ENCODE measurements at regions of chr9 and their contacts with region 1.

Region 1: GRCh38 chr9:89021154-89021803 is 30.0 kb downstream of the S1PR3 start:
- DNase-seq: peak; percentile 82 to 85
- H3K4me3 ChIP-seq: peak overlapping the region; percentile 12; the same call in 1 of the 2 replicates
- H3K27ac ChIP-seq: peak overlapping the region; percentile 70
- H3K4me1 ChIP-seq: peaks cover 42% of the 10 kb centered on the region
- H3K27me3 ChIP-seq: no peaks in the 10 kb centered on the region
- CTCF ChIP-seq: no peak

Region 2: DNA sequence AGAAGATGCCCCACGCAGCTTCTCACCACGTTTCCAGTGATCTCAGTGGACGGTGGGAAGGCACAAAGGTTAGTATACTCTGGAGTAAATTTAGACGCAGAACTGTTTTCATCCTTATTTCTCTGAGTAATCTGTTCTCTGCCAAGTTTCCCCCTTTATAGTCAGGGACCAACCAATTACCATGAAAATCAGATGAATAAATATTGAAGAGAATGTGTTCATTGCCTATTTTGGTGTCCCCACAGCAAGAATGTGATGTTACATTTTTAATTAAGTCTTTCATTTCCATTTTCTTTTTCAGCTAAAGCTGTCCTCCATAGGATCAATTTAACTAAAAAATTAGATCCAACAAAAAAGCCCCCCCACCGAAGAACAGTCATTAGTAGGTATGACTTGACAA is 11.4 kb after region 1 on chr9:
- CTCF ChIA-PET with region 1: interaction called, 11 read pairs
- POLR2A ChIA-PET with region 1: no interaction called
- intact Hi-C with region 1: no loop called
- DNase-seq: no peak
- H3K4me3 ChIP-seq: no peak overlapping the region
- H3K27ac ChIP-seq: no peak overlapping the region
- H3K4me1 ChIP-seq: no peaks in the 10 kb centered on the region
- H3K27me3 ChIP-seq: no peaks in the 10 kb centered on the region
- CTCF ChIP-seq: no peak

Region 3: GRCh38 chr9:89137542-89138462 is 116.5 kb after region 1 on chr9:
- CTCF ChIA-PET with region 1: no interaction called
- POLR2A ChIA-PET with region 1: interaction called, 4 read pairs
- intact Hi-C with region 1: loop called (anchors 1 kb)
- DNase-seq: peak; percentile 80
- H3K4me3 ChIP-seq: no peak overlapping the region
- H3K27ac ChIP-seq: peak overlapping the region; percentile 64
- H3K4me1 ChIP-seq: peaks cover 37% of the 10 kb centered on the region
- H3K27me3 ChIP-seq: no peaks in the 10 kb centered on the region
- CTCF ChIP-seq: no peak

Region 4: GRCh38 chr9:89179895-89180667 is 158.8 kb after region 1 on chr9:
- CTCF ChIA-PET with region 1: no interaction called
- POLR2A ChIA-PET with region 1: no interaction called
- intact Hi-C with region 1: loop called (anchors 1 kb)
- DNase-seq: peak; percentile 93 to 95
- H3K4me3 ChIP-seq: peak overlapping the region; percentile 62
- H3K27ac ChIP-seq: peak overlapping the region; percentile 78
- H3K4me1 ChIP-seq: peaks cover 34% of the 10 kb centered on the region
- H3K27me3 ChIP-seq: no peaks in the 10 kb centered on the region
- CTCF ChIP-seq: no peak

Region 5: DNA sequence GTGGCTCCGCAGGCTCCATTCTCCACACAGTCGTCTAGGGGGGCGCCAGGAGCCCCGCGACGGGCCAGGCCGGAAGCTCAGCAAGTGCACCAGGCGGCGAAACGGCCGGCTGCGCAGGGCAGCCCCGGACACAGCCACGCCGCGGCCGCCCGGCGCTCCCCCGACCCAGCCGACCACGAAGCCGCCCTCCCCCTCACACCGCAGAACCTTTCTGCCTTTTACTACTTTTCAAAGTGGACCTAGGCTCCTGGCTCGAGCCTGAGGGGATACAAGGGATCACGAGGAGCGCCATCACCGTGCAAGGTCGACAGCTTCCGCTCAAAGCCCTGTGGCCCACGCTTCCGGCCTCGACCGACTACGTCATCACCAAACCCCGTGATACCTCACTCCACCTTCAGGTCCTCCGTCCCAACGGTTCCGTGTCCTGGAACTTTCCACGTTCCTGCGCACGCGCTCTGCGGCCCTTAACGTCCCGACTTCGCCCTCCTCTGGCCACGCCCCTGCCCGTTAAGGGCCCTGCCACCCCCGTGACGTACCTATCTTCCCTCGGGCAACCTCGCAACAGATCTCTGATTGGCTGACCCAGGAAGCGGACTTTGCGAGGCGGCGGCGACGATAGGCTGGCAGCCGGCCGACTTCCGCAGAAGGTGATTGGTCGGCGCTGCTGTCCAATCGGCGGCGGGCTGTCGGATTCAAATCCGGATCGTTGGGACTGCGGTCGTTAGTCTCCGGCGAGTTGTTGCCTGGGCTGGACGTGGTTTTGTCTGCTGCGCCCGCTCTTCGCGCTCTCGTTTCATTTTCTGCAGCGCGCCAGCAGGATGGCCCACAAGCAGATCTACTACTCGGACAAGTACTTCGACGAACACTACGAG is 289.4 kb after region 1 on chr9 and contains the start of gene CKS2:
- CTCF ChIA-PET with region 1: interaction called, 9 read pairs
- POLR2A ChIA-PET with region 1: no interaction called
- intact Hi-C with region 1: loop called (anchors 2 kb)
- DNase-seq: peak; percentile 99 to 100
- H3K4me3 ChIP-seq: peak within 1 kb of the TSS; percentile 91
- H3K27ac ChIP-seq: peak within 1 kb of the TSS; percentile 93
- H3K4me1 ChIP-seq: peaks cover 36% of the 10 kb centered on the region
- H3K27me3 ChIP-seq: no peaks in the 10 kb centered on the region
- CTCF ChIP-seq: no peak
- total RNA-seq, gene CKS2: 138 and 260 TPM in 2 replicates

Region 6: GRCh38 chr9:89340332-89340731 is 319.1 kb after region 1 on chr9:
- CTCF ChIA-PET with region 1: interaction called, 14 read pairs
- POLR2A ChIA-PET with region 1: no interaction called
- intact Hi-C with region 1: no loop called
- DNase-seq: no peak
- H3K4me3 ChIP-seq: no peak overlapping the region
- H3K27ac ChIP-seq: no peak overlapping the region
- H3K4me1 ChIP-seq: no peaks in the 10 kb centered on the region
- H3K27me3 ChIP-seq: no peaks in the 10 kb centered on the region
- CTCF ChIP-seq: no peak